ENCODE measurements at regions of chr17 and their contacts with region 1.

Region 1: GRCh38 chr17:6913608-6914443 is 82.0 kb upstream of the ALOX12 start:
- DNase-seq: peak; percentile 42
- ATAC-seq: peak; percentile 97
- H3K4me3 ChIP-seq: no peak overlapping the region
- H3K27ac ChIP-seq: no peak overlapping the region
- H3K4me1 ChIP-seq: no peaks in the 10 kb centered on the region
- H3K27me3 ChIP-seq: peaks cover 22% of the 10 kb centered on the region
- CTCF ChIP-seq: peak; percentile 83
- POLR2A ChIP-seq: no peak
- RAD21 ChIP-seq: peak; percentile 84

Region 2: GRCh38 chr17:6927290-6928126 is 13.7 kb after region 1 on chr17:
- CTCF ChIA-PET with region 1: interaction called, 16 read pairs
- POLR2A ChIA-PET with region 1: no interaction called
- dilution Hi-C with region 1: no loop called
- in situ Hi-C with region 1: no loop called
- intact Hi-C with region 1: no loop called
- DNase-seq: peak; percentile 61
- ATAC-seq: peak; percentile 57
- H3K4me3 ChIP-seq: no peak overlapping the region
- H3K27ac ChIP-seq: peak overlapping the region; percentile 67; the same call in 1 of the 2 replicates
- H3K4me1 ChIP-seq: peaks cover 2% of the 10 kb centered on the region; the same call in 1 of the 2 replicates
- H3K27me3 ChIP-seq: peaks cover 6% of the 10 kb centered on the region
- CTCF ChIP-seq: no peak
- POLR2A ChIP-seq: no peak
- RAD21 ChIP-seq: no peak

Region 3: GRCh38 chr17:7004398-7005253 is 90.8 kb after region 1 on chr17:
- CTCF ChIA-PET with region 1: interaction called, 18 read pairs
- POLR2A ChIA-PET with region 1: no interaction called
- dilution Hi-C with region 1: no loop called
- in situ Hi-C with region 1: loop called (anchors 5 kb)
- intact Hi-C with region 1: loop called (anchors 1 kb)
- DNase-seq: peak; percentile 54
- ATAC-seq: peak; percentile 89
- H3K4me3 ChIP-seq: no peak overlapping the region
- H3K27ac ChIP-seq: no peak overlapping the region
- H3K4me1 ChIP-seq: no peaks in the 10 kb centered on the region; the same call in 1 of the 2 replicates
- H3K27me3 ChIP-seq: no peaks in the 10 kb centered on the region
- CTCF ChIP-seq: peak; percentile 68
- POLR2A ChIP-seq: no peak
- RAD21 ChIP-seq: peak; percentile 70

Region 4: DNA sequence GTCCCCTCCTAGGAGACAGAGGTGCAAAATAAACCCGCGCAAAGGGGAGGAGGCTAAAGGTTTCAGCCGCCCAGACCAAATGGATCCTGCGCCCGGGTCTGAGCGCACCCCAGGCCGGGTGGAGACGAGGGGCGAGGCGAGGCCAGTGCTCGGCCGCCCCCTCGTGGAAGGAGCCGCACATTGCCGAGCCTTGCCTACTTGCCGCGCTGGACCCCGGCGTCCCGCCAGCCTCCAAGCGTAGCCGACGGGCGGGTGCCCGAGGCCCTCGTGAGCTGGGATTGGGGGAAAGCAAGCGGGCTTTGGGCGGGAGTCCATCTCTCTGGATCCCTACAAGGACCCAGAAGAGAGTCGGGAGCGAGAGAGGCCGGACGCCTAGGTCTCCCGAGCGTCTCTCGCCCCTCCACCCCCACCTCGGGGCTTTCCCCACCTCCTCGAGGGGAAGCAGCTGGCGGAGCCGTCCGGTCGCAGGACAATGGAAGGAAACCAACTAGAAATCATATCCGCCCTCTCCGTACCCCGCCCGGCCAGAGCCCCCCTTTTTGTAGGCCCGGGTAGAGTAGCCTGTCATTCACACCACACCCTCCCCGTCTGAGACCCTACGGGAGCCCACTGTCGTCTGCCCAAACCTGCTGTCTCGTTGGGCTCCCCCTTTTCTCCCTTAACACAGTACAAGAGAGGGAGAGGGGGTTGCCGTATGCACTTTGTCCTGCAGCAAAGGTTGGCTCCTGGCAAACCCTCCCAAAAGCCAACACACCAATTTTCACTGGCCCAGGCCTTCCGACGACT is 108.4 kb after region 1 on chr17:
- CTCF ChIA-PET with region 1: interaction called, 13 read pairs
- POLR2A ChIA-PET with region 1: no interaction called
- dilution Hi-C with region 1: no loop called
- in situ Hi-C with region 1: no loop called
- intact Hi-C with region 1: loop called (anchors 1 kb)
- DNase-seq: peak; percentile 36
- ATAC-seq: peak; percentile 89
- H3K4me3 ChIP-seq: no peak overlapping the region
- H3K27ac ChIP-seq: no peak overlapping the region
- H3K4me1 ChIP-seq: peaks cover 4% of the 10 kb centered on the region; the same call in 1 of the 2 replicates
- H3K27me3 ChIP-seq: peaks cover 10% of the 10 kb centered on the region; the same call in 1 of the 2 replicates
- CTCF ChIP-seq: peak; percentile 87
- POLR2A ChIP-seq: 0 out of 2 replicates have a peak, but pooled peaks have one; percentile 39
- RAD21 ChIP-seq: peak; percentile 80

Region 5: DNA sequence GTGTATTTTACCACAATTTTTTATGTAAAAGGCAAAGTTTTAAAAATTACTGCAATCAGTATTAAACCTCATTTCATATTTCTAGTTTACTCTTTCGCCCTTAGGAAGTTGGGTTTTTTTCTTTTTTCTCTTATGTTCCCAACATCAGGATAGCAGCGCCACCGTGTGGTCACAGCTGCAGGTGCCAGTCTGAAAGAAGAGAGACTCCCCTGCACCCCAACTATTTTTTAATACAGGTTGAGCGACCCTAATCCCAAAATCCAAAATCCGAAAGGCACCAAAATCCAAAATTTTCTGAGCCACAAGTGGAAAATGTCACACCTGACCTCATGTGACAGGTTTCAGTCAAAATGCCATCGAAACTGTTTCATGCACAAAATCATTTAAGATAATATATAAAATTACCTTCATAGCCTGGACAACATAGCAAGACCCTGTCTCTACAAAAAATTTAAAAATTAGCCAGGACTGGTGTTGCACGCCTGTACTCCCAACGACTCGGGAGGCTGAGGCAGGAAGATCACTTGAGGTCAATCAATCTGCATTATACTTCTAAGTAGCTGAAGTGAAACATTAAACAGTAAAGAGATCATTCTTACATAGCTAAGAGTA is 222.5 kb after region 1 on chr17:
- CTCF ChIA-PET with region 1: no interaction called
- POLR2A ChIA-PET with region 1: no interaction called
- dilution Hi-C with region 1: no loop called
- in situ Hi-C with region 1: loop called (anchors 25 kb)
- intact Hi-C with region 1: loop called (anchors 1 kb)
- DNase-seq: peak; percentile 69
- ATAC-seq: peak; percentile 44; the same call in 1 of the 2 replicates
- H3K4me3 ChIP-seq: no peak overlapping the region
- H3K27ac ChIP-seq: no peak overlapping the region
- H3K4me1 ChIP-seq: no peaks in the 10 kb centered on the region
- H3K27me3 ChIP-seq: peaks cover 47% of the 10 kb centered on the region
- CTCF ChIP-seq: peak; percentile 90
- POLR2A ChIP-seq: no peak
- RAD21 ChIP-seq: peak; percentile 88